B cell (primary cell): ENCODE measurements at regions of chr10 and their contacts with region 1.

Region 1: GRCh38 chr10:43436400-43437140 is at the start of gene ZNF487:
- DNase-seq: peak; percentile 97
- ATAC-seq: peak; percentile 91
- H3K4me3 ChIP-seq: peak within 1 kb of the TSS; percentile 65 to 99 (median 81)
- H3K4me3 Mint-ChIP-seq: peak within 1 kb of the TSS; percentile 98
- H3K27ac ChIP-seq: peak within 1 kb of the TSS; percentile 97 to 98
- H3K27ac Mint-ChIP-seq: peak within 1 kb of the TSS; percentile 99
- H3K4me1 ChIP-seq: peaks cover 17 to 47% of the 10 kb centered on the region in 2 donors
- H3K4me1 Mint-ChIP-seq: peaks cover 34% of the 10 kb centered on the region
- H3K27me3 ChIP-seq: no peaks in the 10 kb centered on the region
- H3K27me3 Mint-ChIP-seq: no peaks in the 10 kb centered on the region
- CTCF ChIP-seq: no peak
- total RNA-seq, gene ZNF487: 6.7 and 9.8 TPM in 2 replicates

Region 2: DNA sequence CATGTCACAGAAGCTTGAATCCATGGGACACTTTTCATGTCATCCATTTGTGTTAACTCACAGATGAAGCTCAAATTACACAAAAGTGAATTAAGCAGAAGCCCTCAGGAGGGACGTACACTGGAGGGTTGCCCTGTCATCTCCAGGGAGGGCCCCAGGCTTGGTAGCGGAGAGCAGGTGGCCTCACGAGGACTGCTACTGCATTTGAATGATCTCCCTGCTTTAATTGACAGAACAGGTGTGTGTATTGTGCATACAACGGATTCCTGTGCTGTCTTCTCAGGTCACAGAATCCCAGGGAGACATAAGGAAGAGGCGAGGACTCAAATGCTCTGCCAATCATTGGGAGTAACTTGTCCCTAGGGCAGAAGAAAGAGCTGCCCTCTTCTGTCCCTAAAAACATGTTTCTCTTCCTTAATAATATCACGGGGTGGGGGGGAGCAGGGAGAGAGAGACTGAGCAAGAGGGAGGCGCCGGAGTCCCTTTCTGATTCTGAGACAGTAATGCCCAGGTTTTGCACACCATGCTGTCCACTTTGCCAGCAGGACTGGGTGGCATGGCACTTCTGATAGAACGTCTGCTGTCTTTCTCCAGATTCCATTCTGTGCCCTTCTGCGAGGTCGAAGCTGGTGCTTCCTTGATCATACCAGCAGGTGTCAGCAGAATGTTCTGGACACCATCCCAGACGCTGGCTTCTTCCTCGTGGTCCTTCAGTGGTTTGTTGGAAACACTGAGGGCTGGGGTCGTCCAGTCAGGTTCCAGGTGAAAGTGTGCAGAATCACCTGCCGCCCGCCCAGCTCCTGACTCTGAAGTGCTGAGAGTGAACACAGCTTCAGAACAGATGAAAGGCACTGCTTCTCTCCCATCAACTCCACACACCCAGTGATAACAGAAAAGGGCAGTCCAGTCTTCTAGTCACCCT is 143.6 kb before region 1 on chr10:
- CTCF ChIA-PET with region 1: interaction called, 3 read pairs
- POLR2A ChIA-PET with region 1: no interaction called
- intact Hi-C with region 1: loop called (anchors 1 kb)
- DNase-seq: peak; percentile 67
- ATAC-seq: peak; percentile 66
- H3K4me3 ChIP-seq: no peak overlapping the region
- H3K4me3 Mint-ChIP-seq: no peak overlapping the region
- H3K27ac ChIP-seq: no peak overlapping the region
- H3K27ac Mint-ChIP-seq: no peak overlapping the region
- H3K4me1 ChIP-seq: peaks cover 8 to 17% of the 10 kb centered on the region in 2 donors
- H3K4me1 Mint-ChIP-seq: peaks cover 8% of the 10 kb centered on the region
- H3K27me3 ChIP-seq: peaks cover 0 to 15% (median 7%) of the 10 kb centered on the region in 4 experiments
- H3K27me3 Mint-ChIP-seq: peaks cover 26% of the 10 kb centered on the region
- CTCF ChIP-seq: peak; percentile 73

Region 3: DNA sequence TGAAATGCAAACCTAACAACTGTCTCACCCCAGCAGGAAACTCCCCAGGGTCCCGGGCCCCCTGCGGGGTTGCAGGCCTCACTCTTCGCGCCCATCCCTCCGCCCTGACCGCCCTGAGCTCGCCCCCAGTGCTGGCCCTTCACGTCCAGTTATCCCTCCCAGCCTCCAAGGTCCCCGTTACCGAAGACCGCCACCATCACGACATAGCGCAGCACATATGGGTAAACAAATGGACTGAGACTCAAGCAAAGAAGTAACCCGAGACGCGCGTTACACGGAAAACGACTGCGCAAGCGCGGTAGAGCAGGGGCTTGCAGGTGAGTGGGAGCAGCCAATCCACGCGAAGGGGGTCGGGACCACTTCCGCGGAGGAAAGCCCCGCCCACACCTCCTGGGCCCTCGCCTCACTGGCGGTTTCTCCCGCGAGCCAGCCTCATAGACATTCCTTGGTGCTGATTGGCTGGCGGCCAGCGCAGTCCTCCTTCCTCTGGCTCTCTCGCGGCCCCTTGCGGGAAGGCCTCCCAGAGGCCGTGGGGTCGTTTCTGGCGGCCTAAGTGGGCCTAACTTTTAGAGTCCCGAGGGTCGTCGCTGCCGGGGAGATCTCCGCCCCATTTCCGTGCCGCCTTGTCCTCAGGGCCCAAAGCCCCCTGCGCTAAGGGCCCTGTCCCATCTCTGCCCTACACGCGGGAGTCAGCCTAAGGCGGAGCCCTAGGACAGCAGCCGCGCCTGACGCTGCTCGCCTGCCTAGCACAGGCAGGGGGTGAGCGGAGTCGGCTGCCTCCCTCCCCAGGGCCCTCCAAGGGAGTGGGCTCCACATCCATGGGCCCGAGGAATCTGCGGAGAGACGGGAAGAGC is 74.4 kb before region 1 on chr10:
- CTCF ChIA-PET with region 1: no interaction called
- POLR2A ChIA-PET with region 1: interaction called, 6 read pairs
- intact Hi-C with region 1: loop called (anchors 1 kb)
- DNase-seq: peak; percentile 95
- ATAC-seq: peak; percentile 97
- H3K4me3 ChIP-seq: peak overlapping the region; percentile 66 to 91 (median 74)
- H3K4me3 Mint-ChIP-seq: peak overlapping the region; percentile 97
- H3K27ac ChIP-seq: peak overlapping the region; percentile 78 to 86
- H3K27ac Mint-ChIP-seq: peak overlapping the region; percentile 94
- H3K4me1 ChIP-seq: peaks cover 8 to 19% of the 10 kb centered on the region in 2 donors
- H3K4me1 Mint-ChIP-seq: peaks cover 25% of the 10 kb centered on the region
- H3K27me3 ChIP-seq: no peaks in the 10 kb centered on the region
- H3K27me3 Mint-ChIP-seq: no peaks in the 10 kb centered on the region
- CTCF ChIP-seq: peak; percentile 36

Region 4: GRCh38 chr10:43396928-43397624 is 39.5 kb before region 1 on chr10:
- CTCF ChIA-PET with region 1: interaction called, 4 read pairs
- POLR2A ChIA-PET with region 1: interaction called, 4 read pairs
- intact Hi-C with region 1: loop called (anchors 1 kb)
- DNase-seq: peak; percentile 90
- ATAC-seq: peak; percentile 81
- H3K4me3 ChIP-seq: peak overlapping the region; percentile 46 to 75 (median 61)
- H3K4me3 Mint-ChIP-seq: peak overlapping the region; percentile 95
- H3K27ac ChIP-seq: peak overlapping the region; percentile 85 to 97
- H3K27ac Mint-ChIP-seq: peak overlapping the region; percentile 96
- H3K4me1 ChIP-seq: peaks cover 68 to 79% of the 10 kb centered on the region in 2 donors
- H3K4me1 Mint-ChIP-seq: peaks cover 73% of the 10 kb centered on the region
- H3K27me3 ChIP-seq: no peaks in the 10 kb centered on the region
- H3K27me3 Mint-ChIP-seq: no peaks in the 10 kb centered on the region
- CTCF ChIP-seq: no peak

Region 5: DNA sequence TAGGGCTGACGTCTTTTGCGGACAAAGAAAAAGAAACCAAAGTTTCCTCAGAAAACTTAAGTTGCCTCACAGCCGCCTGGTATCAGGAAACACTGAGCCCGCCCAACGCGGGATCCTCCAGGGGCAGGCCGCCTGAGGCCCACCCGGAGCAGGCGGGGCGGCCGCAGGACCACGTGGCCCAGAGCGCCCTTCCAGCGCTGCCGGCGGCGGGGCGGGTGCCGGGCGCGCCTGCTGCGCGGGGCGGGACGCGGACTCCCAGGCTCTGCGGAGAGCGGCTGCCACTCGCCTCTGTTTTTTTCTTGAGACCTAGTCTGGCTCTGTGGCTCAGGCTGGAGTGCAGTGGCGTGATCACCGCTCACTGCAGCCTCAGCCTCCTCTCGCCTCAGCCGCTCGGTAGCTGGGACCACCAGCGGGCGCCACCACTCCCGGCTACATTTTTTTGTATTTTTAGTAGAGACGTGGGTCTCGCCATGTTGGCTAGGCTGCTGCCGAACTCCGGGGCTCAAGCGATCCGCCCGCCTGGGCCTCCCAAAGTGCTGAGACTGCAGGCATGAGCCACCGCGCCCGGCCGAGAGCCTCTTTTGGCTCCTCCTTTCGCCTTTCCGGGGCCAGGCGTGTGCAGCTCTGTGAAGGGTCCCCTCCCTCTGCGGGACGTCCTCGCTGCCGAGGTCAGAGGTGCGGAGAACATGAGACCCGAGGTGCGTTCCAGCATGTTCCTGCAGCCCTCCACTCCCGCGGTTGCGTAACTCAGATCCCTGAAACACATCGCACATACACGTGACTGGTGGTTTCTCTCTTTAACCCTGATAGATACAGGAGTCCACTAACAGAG is 16.0 kb before region 1 on chr10:
- CTCF ChIA-PET with region 1: interaction called, 9 read pairs
- POLR2A ChIA-PET with region 1: interaction called, 6 read pairs
- intact Hi-C with region 1: loop called (anchors 1 kb)
- DNase-seq: peak; percentile 85
- ATAC-seq: peak; percentile 83
- H3K4me3 ChIP-seq: peak overlapping the region; percentile 25 to 80 (median 70)
- H3K4me3 Mint-ChIP-seq: peak overlapping the region; percentile 95
- H3K27ac ChIP-seq: peak overlapping the region; percentile 90 to 95
- H3K27ac Mint-ChIP-seq: peak overlapping the region; percentile 98
- H3K4me1 ChIP-seq: peaks cover 28 to 38% of the 10 kb centered on the region in 2 donors
- H3K4me1 Mint-ChIP-seq: peaks cover 26% of the 10 kb centered on the region
- H3K27me3 ChIP-seq: no peaks in the 10 kb centered on the region
- H3K27me3 Mint-ChIP-seq: no peaks in the 10 kb centered on the region
- CTCF ChIP-seq: peak; percentile 35

Region 6: DNA sequence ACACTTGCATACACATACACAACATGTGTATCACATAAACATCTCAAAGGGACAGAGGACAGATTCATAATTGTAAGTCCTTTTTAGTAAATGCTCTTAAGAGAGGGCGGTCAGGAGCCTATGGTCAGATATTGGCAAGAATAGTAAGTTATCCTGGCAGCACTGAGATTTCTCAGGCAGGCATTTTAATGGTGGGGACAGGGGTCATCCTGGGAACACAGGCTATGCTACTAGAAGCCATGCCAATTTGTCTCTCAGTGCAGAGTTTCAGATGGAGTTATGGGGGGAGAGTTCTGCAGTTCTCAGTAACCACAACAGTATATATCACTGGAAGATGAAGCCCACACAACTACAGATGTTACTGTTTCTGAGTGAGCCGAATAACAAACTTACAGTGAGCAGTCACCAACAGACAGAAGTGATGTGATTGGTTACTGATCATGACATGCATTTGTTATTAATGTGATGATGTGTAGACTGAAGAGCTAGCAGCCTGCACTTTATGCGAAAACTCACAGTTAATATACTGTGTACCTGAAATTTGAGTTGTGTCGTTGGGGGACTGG is 16.8 kb after region 1 on chr10:
- CTCF ChIA-PET with region 1: interaction called, 8 read pairs
- POLR2A ChIA-PET with region 1: interaction called, 28 read pairs
- intact Hi-C with region 1: loop called (anchors 1 kb)
- DNase-seq: no peak
- ATAC-seq: no peak
- H3K4me3 ChIP-seq: no peak overlapping the region
- H3K4me3 Mint-ChIP-seq: peak overlapping the region; percentile 83
- H3K27ac ChIP-seq: peak overlapping the region; percentile 85 to 90
- H3K27ac Mint-ChIP-seq: peak overlapping the region; percentile 98
- H3K4me1 ChIP-seq: peaks cover 47 to 71% of the 10 kb centered on the region in 2 donors
- H3K4me1 Mint-ChIP-seq: peaks cover 48% of the 10 kb centered on the region
- H3K27me3 ChIP-seq: no peaks in the 10 kb centered on the region
- H3K27me3 Mint-ChIP-seq: no peaks in the 10 kb centered on the region
- CTCF ChIP-seq: no peak